ENCODE measurements at regions of chr16 and their contacts with region 1.

Region 1: GRCh38 chr16:57185944-57186871 is at the starts of genes PSME3IP1 and RSPRY1:
- DNase-seq: peak; percentile 95 to 100
- ATAC-seq: peak; percentile 88 to 95 (median 93)
- H3K4me3 ChIP-seq: peak within 1 kb of the TSS; percentile 98
- H3K4me3 Mint-ChIP-seq: peak within 1 kb of the TSS; percentile 100
- H3K27ac ChIP-seq: peak within 1 kb of the TSS; percentile 96
- H3K27ac Mint-ChIP-seq: peak within 1 kb of the TSS; percentile 98 to 99
- H3K4me1 ChIP-seq: peaks cover 21% of the 10 kb centered on the region
- H3K4me1 Mint-ChIP-seq: peaks cover 49 to 50% of the 10 kb centered on the region in 2 donors
- H3K27me3 ChIP-seq: no peaks in the 10 kb centered on the region
- H3K27me3 Mint-ChIP-seq: no peaks in the 10 kb centered on the region
- CTCF ChIP-seq: no peak
- total RNA-seq, gene PSME3IP1: 129 to 148 (median 133) TPM
- total RNA-seq, gene RSPRY1: 22.6 to 26.6 (median 23.4) TPM

Region 2: GRCh38 chr16:57084257-57084770 is 101.9 kb before region 1 on chr16:
- intact Hi-C with region 1: loop called (anchors 5 kb)
- DNase-seq: peak; percentile 62 to 92
- ATAC-seq: peak; percentile 92 to 99 (median 94)
- H3K4me3 ChIP-seq: no peak overlapping the region
- H3K4me3 Mint-ChIP-seq: no peak overlapping the region
- H3K27ac ChIP-seq: peak overlapping the region; percentile 25
- H3K27ac Mint-ChIP-seq: peak overlapping the region; percentile 69 to 80
- H3K4me1 ChIP-seq: peaks cover 9% of the 10 kb centered on the region
- H3K4me1 Mint-ChIP-seq: peaks cover 7 to 8% of the 10 kb centered on the region in 2 donors
- H3K27me3 ChIP-seq: no peaks in the 10 kb centered on the region
- H3K27me3 Mint-ChIP-seq: no peaks in the 10 kb centered on the region
- CTCF ChIP-seq: peak; percentile 91

Region 3: DNA sequence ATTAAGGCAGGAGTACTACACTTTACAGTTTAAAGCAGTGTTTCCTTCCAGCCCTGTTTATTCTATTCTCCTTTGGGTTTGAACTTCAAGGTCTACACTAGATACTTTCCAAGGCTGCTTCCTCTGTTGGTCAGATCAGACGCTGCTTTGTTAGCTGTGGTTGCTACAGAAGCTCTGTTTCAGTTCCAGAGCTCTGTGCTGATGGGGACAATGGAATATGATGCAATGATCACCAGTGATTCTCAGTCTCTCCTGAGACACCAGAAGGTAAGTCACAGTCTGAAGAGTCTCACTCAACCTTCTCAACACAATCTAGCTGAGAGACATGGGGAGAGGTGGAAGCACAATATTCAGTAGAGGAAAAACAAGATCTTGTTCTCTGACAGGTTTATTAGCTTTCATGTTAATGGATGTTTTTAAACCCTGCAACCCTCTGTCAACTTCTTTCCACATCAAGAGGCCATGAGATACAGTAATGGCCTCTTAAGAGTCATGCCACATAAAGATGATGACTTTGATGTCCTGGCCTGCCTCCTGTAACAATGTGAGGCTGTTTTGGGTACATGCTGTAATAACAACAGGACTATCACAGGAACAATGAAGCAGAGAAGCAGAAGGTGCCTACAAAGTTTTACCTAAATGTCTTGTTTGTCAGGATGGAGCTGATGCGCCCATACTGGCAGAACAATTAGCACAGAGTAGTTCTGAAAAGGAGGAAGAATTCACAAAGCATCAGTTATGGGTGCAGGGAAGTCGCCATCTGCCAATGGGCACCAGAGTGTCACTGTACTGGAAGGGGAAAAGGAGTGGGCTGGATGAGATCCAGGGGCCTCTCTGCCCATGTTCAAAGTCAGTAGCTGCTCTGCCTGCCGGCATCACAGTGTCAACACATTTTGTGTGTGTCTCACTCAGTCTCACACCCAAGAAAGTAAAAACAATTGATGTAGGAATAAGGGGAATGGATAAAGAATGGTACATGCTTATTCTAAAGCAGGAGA is 33.8 kb before region 1 on chr16:
- intact Hi-C with region 1: no loop called
- DNase-seq: no peak
- ATAC-seq: no peak
- H3K4me3 ChIP-seq: no peak overlapping the region
- H3K4me3 Mint-ChIP-seq: no peak overlapping the region
- H3K27ac ChIP-seq: no peak overlapping the region
- H3K27ac Mint-ChIP-seq: no peak overlapping the region
- H3K4me1 ChIP-seq: peaks cover 3% of the 10 kb centered on the region
- H3K4me1 Mint-ChIP-seq: peaks cover 12% of the 10 kb centered on the region in 2 donors
- H3K27me3 ChIP-seq: no peaks in the 10 kb centered on the region
- H3K27me3 Mint-ChIP-seq: no peaks in the 10 kb centered on the region
- CTCF ChIP-seq: no peak

Region 4: GRCh38 chr16:57244767-57245471 is 58.7 kb after region 1 on chr16 and contains the start of gene ARL2BP:
- intact Hi-C with region 1: loop called (anchors 2 kb)
- DNase-seq: peak; percentile 97
- ATAC-seq: peak; percentile 95 to 98 (median 95)
- H3K4me3 ChIP-seq: peak within 1 kb of the TSS; percentile 49
- H3K4me3 Mint-ChIP-seq: peak within 1 kb of the TSS; percentile 91
- H3K27ac ChIP-seq: peak within 1 kb of the TSS; percentile 78
- H3K27ac Mint-ChIP-seq: peak within 1 kb of the TSS; percentile 96
- H3K4me1 ChIP-seq: peaks cover 8% of the 10 kb centered on the region
- H3K4me1 Mint-ChIP-seq: peaks cover 14 to 21% of the 10 kb centered on the region in 2 donors
- H3K27me3 ChIP-seq: no peaks in the 10 kb centered on the region
- H3K27me3 Mint-ChIP-seq: no peaks in the 10 kb centered on the region
- CTCF ChIP-seq: no peak
- total RNA-seq, gene ARL2BP: 36.5 to 44.4 (median 43.7) TPM